ENCODE measurements at regions of chr9 and their contacts with region 1.

Region 1: GRCh38 chr9:77841739-77842386 is 189.7 kb downstream of the GNAQ start:
- DNase-seq: no peak
- H3K4me3 ChIP-seq: peak overlapping the region in 2 of 59 donors; percentile 7 to 10
- H3K27ac ChIP-seq: peak overlapping the region in 52 of 59 donors; percentile 3 to 82 (median 61)
- H3K27me3 ChIP-seq: no peaks in the 10 kb centered on the region
- CTCF ChIP-seq: peak in 55 of 56 donors; percentile 22 to 77 (median 52)

Region 2: DNA sequence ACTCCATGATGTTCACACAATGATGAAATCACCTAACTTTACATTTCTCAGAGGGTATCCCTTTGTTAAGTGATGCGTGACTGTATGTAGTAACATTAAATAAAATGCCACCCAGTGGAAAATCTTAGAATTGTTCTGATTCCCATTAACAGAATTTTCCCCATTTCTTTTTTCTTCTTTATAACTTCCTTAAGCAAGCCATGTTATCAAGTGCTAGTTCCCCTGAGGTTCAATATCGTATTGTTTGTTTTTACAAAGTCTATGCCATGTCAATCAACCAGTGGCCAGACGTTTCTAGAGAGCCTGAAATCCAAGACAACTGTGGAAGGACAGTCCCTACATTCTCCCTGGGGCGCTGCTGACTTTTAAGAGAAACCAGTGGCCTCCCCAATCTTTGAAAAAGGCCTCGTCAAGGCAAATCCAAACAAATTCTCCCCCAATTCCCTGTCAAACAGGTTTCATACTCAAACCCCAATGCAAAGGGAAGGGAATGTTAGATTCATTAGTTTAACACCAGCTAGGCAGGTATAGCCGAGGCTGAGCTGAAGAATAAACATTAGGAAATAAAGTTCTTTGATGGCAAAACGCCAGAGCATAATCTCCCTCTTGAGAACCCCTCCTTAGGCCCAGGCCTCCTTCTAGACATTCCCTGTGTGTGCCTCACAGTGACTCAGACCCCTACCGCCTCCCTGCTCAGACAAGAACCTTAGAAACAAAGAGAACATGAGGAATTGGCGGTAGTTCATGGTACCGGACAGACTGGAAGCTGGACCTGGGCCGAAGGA is 392.4 kb before region 1 on chr9:
- intact Hi-C with region 1: loop called in 1 of 2 experiments (anchors 5 kb)
- DNase-seq: no peak
- H3K4me3 ChIP-seq: no peak overlapping the region
- H3K27ac ChIP-seq: no peak overlapping the region
- H3K27me3 ChIP-seq: no peaks in the 10 kb centered on the region
- CTCF ChIP-seq: peak in 7 of 56 donors; percentile 8 to 25 (median 15)

Region 3: GRCh38 chr9:77751341-77752091 is 90.3 kb before region 1 on chr9:
- intact Hi-C with region 1: loop called in 1 of 2 experiments (anchors 10 kb)
- DNase-seq: peak in 1 of 10 donors; percentile 9
- H3K4me3 ChIP-seq: peak overlapping the region in 20 of 59 donors; percentile 3 to 38 (median 21)
- H3K27ac ChIP-seq: peak overlapping the region in 54 of 59 donors; percentile 1 to 84 (median 62)
- H3K27me3 ChIP-seq: no peaks in the 10 kb centered on the region
- CTCF ChIP-seq: peak; percentile 48 to 85 (median 70)

Region 4: GRCh38 chr9:78213712-78214111 is 371.8 kb after region 1 on chr9:
- intact Hi-C with region 1: loop called in 1 of 2 experiments (anchors 10 kb)
- DNase-seq: no peak
- H3K4me3 ChIP-seq: peak overlapping the region in 8 of 59 donors; percentile 12 to 41 (median 17)
- H3K27ac ChIP-seq: peak overlapping the region in 56 of 59 donors; percentile 6 to 86 (median 70)
- H3K27me3 ChIP-seq: no peaks in the 10 kb centered on the region
- CTCF ChIP-seq: peak in 53 of 56 donors; percentile 29 to 78 (median 58)